ENCODE measurements at regions of chr3 and their contacts with region 1.

Region 1: DNA sequence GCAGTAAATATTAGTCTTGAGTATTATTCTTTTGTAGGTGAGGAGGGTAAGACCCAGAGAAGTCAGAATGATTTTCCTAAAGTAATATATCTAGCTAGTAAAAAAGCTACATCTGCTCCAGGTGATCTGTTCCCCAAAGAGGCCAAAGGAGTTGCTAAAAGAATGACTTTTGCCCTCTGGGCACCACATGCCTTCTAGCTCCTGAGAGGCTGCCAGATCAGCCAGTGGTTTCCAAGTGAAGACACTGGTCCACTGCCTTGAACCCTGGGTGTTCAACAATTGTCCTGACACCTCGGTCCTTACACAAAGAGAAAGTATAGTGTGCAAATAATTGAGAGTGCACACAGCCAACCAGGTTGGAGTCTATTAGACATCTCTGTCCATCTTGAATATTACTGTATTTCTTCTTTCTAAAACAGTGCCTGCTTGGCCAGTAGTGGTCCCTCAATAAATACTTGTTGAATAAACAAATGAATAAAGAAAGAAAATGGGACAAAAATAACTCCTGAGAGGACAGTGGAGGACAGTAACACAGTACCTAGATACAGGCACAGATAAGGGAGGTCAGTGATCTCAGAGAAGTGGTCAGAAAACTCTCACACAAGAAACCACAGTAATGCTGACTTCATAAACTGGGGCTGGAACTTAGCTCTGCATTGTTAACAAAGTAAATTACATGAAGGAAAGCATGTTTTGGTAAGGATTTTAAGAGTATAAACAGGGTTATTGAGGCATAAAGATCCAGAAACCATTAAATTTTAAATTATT is 56.6 kb upstream of the CSTA start:
- DNase-seq: no peak
- H3K4me3 ChIP-seq: no peak overlapping the region
- H3K27ac ChIP-seq: no peak overlapping the region
- H3K4me1 ChIP-seq: no peaks in the 10 kb centered on the region
- H3K27me3 ChIP-seq: no peaks in the 10 kb centered on the region
- CTCF ChIP-seq: no peak
- EP300 ChIP-seq: no peak
- POLR2A ChIP-seq: no peak

Region 2: GRCh38 chr3:122101646-122102045 is 166.8 kb before region 1 on chr3:
- in situ Hi-C with region 1: loop called in 2 of 4 experiments (anchors 10 to 25 kb)
- intact Hi-C with region 1: no loop called
- DNase-seq: no peak
- H3K4me3 ChIP-seq: no peak overlapping the region
- H3K27ac ChIP-seq: no peak overlapping the region
- H3K4me1 ChIP-seq: no peaks in the 10 kb centered on the region
- H3K27me3 ChIP-seq: no peaks in the 10 kb centered on the region
- CTCF ChIP-seq: peak; percentile 35 to 62 (median 44)
- EP300 ChIP-seq: no peak
- POLR2A ChIP-seq: no peak

Measured in transverse colon (tissue), 4 donors.